ENCODE measurements at regions of chr4 and their contacts with region 1.

Region 1: DNA sequence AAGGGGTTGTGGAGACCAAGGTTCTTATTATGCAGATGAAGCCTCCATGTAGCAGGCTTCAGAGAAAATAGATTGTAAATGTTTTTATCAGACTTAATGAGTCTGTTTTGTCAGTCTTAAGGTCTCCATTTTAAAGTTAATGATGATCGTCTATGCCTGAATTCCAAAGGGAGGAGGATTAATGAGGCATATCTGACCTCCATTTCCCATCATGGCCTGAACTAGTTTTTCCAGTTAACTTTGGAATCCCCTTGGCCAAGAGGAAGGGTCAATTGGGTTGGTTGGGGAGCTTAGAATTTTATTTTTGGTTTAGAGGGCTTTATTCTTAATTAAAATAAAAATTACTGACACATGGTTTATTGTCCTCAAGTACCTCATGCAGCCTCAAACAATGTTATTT is 6.9 kb upstream of the PARM1 start:
- DNase-seq: no peak
- H3K4me3 ChIP-seq: no peak overlapping the region
- H3K27ac ChIP-seq: no peak overlapping the region
- H3K4me1 ChIP-seq: no peaks in the 10 kb centered on the region
- H3K27me3 ChIP-seq: no peaks in the 10 kb centered on the region
- CTCF ChIP-seq: no peak
- EP300 ChIP-seq: no peak
- POLR2A ChIP-seq: no peak

Region 2: DNA sequence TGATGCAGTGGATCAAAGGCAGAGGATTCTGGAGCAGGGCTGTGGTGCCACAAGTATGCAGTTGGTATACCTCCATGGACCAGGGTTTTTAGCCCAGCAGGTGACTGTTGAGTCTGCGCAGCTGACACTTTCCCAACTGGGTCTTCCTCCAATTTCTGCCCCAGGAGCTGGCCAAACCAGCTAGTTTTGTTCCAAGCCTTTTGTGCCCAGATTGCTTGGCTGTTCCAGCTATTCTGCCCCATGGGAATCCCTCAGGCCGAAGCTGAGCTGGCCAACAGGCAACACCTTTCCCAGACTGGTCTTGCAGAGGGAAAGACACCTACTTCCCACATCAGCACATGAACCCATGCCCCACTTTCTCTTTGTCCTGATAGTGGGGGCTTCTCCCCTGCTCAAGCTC is 1644.6 kb before region 1 on chr4:
- in situ Hi-C with region 1: no loop called
- intact Hi-C with region 1: loop called (anchors 5 kb)
- DNase-seq: no peak
- H3K4me3 ChIP-seq: no peak overlapping the region
- H3K27ac ChIP-seq: no peak overlapping the region
- H3K4me1 ChIP-seq: no peaks in the 10 kb centered on the region
- H3K27me3 ChIP-seq: no peaks in the 10 kb centered on the region
- CTCF ChIP-seq: no peak
- EP300 ChIP-seq: no peak
- POLR2A ChIP-seq: no peak